Psoas muscle (tissue), 8 donors: ENCODE measurements at regions of chr16 and their contacts with region 1.

Region 1: GRCh38 chr16:68040507-68041288 is 17.6 kb downstream of the DUS2 start:
- DNase-seq: peak; percentile 80 to 91
- ATAC-seq: peak; percentile 92 to 95 (median 94)
- H3K4me3 ChIP-seq: no peak overlapping the region
- H3K27ac ChIP-seq: no peak overlapping the region
- H3K4me1 ChIP-seq: peaks cover 4% of the 10 kb centered on the region
- H3K27me3 ChIP-seq: no peaks in the 10 kb centered on the region
- CTCF ChIP-seq: peak; percentile 80

Region 2: GRCh38 chr16:67672739-67673662 is 367.7 kb before region 1 on chr16:
- intact Hi-C with region 1: loop called in 1 of 2 experiments (anchors 10 kb)
- DNase-seq: peak; percentile 72 to 82
- ATAC-seq: peak; percentile 49 to 65 (median 55)
- H3K4me3 ChIP-seq: no peak overlapping the region
- H3K27ac ChIP-seq: peak overlapping the region; percentile 69
- H3K4me1 ChIP-seq: peaks cover 14% of the 10 kb centered on the region
- H3K27me3 ChIP-seq: no peaks in the 10 kb centered on the region
- CTCF ChIP-seq: peak; percentile 71

Region 3: GRCh38 chr16:67816240-67817031 is 224.3 kb before region 1 on chr16:
- intact Hi-C with region 1: loop called (anchors 2 to 5 kb)
- DNase-seq: peak; percentile 85 to 93
- ATAC-seq: peak; percentile 97 to 100 (median 98)
- H3K4me3 ChIP-seq: no peak overlapping the region
- H3K27ac ChIP-seq: peak overlapping the region; percentile 62
- H3K4me1 ChIP-seq: peaks cover 3% of the 10 kb centered on the region
- H3K27me3 ChIP-seq: no peaks in the 10 kb centered on the region
- CTCF ChIP-seq: peak; percentile 100

Region 4: DNA sequence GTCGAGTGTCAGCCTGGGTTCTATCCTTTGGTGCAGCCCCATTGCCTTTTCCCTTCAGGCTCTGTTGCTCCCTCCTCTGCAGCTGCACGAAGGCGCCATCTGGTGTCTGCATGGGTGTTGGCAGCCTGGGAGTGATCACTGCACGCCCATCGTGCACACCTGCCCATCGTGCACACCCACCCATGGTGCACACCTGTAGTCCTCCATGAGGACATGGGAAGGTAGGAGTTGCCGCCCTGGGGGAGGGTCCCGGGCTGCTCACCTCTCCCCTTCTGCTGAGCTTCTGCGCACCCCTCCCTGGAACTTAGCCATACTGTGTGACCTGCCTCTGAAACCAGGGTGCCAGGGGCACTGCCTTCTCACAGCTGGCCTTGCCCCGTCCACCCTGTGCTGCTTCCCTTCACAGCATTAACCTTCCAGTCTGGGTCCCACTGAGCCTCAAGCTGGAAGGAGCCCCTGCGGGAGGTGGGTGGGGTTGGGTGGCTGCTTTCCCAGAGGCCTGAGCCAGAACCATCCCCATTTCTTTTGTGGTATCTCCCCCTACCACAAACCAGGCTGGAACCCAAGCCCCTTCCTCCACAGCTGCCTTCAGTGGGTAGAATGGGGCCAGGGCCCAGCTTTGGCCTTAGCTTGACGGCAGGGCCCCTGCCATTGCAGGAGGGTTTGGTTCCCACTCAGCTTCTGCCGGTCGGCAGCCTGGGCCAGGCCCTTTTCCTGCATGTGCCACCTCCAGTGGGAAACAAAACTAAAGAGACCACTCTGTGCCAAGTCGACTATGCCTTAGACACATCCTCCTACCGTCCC is 111.9 kb before region 1 on chr16:
- intact Hi-C with region 1: loop called in 1 of 2 experiments (anchors 5 kb)
- DNase-seq: peak; percentile 75 to 89
- ATAC-seq: peak; percentile 64 to 79 (median 72)
- H3K4me3 ChIP-seq: no peak overlapping the region
- H3K27ac ChIP-seq: no peak overlapping the region
- H3K4me1 ChIP-seq: peaks cover 36% of the 10 kb centered on the region
- H3K27me3 ChIP-seq: no peaks in the 10 kb centered on the region
- CTCF ChIP-seq: peak; percentile 84

Region 5: GRCh38 chr16:67993189-67994039 is 47.3 kb before region 1 on chr16:
- intact Hi-C with region 1: loop called (anchors 2 kb)
- DNase-seq: peak; percentile 85 to 93
- ATAC-seq: peak; percentile 74 to 85 (median 80)
- H3K4me3 ChIP-seq: peak overlapping the region; percentile 64
- H3K27ac ChIP-seq: peak overlapping the region; percentile 81
- H3K4me1 ChIP-seq: peaks cover 46% of the 10 kb centered on the region
- H3K27me3 ChIP-seq: no peaks in the 10 kb centered on the region
- CTCF ChIP-seq: peak; percentile 100

Region 6: DNA sequence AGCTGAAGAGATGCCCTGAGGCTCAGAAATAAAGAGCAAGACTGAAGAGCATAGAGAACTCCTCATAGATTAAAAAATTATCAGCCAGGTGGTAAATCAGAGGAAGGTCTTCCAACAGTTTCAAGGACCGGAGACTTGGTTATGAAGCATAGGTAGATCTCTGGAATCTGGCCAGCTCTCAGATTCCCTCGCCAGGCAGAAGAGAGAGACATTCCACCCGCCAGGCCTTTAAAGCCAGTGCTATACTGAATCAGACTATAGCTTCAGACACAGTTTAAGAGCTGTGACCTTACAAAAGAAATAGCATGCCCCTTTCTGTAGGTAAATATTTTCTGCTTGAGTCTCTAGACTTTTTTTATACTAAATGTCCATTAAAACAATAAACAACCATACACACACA is 114.7 kb after region 1 on chr16:
- intact Hi-C with region 1: no loop called
- DNase-seq: no peak
- ATAC-seq: no peak
- H3K4me3 ChIP-seq: no peak overlapping the region
- H3K27ac ChIP-seq: no peak overlapping the region
- H3K4me1 ChIP-seq: no peaks in the 10 kb centered on the region
- H3K27me3 ChIP-seq: no peaks in the 10 kb centered on the region
- CTCF ChIP-seq: no peak

Region 7: DNA sequence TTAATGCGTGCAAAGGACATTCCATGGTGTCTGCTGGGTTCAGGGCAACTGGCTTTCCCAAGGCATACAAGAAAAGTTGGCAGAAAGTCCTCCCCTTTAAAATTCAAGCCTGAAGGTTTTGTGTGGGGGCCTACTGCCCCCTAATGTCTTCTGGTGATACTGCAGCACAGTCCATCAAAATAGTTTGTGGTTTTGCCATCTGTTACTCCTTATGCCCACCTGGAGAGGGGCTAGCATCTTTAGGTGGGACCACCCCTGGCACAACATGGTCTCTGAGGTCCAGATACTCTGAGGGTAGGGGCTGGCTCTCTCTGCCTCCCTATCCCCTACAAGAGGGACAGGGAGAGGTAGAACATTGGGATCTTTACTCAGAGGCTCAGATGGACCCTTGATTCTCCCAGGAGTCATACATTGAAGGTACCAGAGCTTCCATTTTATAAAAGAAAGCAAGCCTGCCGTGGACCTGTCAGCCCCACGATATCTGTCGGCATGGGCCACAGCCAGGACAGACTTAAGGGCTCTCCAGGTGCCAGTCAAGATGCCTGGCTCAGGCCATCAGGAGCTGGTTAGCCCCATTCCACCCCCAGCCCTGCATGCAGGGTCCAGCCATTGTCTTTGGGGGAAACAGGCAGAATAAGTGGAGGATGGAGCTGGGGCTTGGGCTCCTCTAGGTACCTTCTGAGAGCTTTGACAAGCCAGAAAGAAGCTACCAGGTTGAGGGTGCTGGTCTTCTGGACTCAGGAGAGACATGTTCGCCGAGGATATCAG is 188.9 kb after region 1 on chr16:
- intact Hi-C with region 1: no loop called
- DNase-seq: no peak
- ATAC-seq: peak; percentile 51 to 78 (median 66)
- H3K4me3 ChIP-seq: no peak overlapping the region
- H3K27ac ChIP-seq: peak overlapping the region; percentile 80
- H3K4me1 ChIP-seq: peaks cover 32% of the 10 kb centered on the region
- H3K27me3 ChIP-seq: no peaks in the 10 kb centered on the region
- CTCF ChIP-seq: peak; percentile 92